Activated CD4-positive, alpha-beta T cell treated with anti-CD3 and anti-CD28 coated beads, Interleukin-2, amount 10 ng/mL, durations not matched to agents 24 days and 14 days (primary cell): ENCODE measurements at regions of chr2 and their contacts with region 1.

Region 1: DNA sequence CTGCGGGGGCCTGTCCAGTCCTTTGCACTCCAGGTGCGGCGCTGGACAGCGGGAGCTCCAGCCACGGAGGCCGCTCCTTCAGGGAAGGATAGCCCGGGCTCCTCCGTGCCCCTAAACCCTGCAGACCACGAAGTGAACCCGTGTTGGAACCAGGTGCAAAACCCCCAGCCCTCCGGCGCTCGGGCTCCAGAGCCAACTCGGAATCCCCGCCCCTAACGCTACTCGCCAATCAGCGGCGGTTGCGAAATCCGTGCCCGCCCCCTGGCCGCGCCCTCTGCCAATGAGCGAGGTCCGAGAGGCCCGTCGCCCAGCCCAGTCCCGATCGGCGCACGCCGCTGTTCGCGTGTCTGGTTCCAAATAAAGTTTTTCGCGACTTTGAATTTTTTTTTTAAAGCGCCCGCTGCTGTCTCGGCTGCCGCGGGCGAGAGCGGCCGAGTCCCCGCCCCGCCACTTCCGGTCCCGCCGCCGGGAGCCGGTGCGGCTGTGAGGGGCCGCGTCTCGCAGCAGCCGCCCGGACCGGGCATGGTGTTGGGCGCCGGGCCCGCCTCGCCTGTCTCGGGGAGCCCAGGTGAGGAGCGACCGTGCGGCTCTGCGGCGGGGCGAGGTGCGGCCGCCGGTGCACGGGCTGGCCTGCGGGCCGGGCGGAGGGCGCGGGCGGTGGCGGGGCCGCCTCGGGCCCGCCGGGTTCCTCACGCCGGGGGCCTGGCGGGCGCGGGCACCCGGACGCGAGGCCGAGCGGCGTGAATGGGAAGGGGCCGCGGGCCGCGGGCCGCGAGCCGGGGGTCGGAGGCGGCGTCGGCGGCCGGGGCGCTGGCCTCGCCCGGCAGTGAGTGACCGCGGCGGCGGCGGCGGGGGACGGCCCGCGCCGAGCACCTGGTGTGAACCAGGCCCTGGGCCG is at the start of gene UBE2F:
- DNase-seq: peak; percentile 100
- H3K4me3 Mint-ChIP-seq: peak within 1 kb of the TSS; percentile 94
- H3K27ac Mint-ChIP-seq: peak within 1 kb of the TSS; percentile 92
- H3K4me1 Mint-ChIP-seq: peaks cover 33% of the 10 kb centered on the region
- H3K27me3 Mint-ChIP-seq: no peaks in the 10 kb centered on the region
- total RNA-seq, gene UBE2F: 115 and 124 TPM in 2 replicates

Region 2: DNA sequence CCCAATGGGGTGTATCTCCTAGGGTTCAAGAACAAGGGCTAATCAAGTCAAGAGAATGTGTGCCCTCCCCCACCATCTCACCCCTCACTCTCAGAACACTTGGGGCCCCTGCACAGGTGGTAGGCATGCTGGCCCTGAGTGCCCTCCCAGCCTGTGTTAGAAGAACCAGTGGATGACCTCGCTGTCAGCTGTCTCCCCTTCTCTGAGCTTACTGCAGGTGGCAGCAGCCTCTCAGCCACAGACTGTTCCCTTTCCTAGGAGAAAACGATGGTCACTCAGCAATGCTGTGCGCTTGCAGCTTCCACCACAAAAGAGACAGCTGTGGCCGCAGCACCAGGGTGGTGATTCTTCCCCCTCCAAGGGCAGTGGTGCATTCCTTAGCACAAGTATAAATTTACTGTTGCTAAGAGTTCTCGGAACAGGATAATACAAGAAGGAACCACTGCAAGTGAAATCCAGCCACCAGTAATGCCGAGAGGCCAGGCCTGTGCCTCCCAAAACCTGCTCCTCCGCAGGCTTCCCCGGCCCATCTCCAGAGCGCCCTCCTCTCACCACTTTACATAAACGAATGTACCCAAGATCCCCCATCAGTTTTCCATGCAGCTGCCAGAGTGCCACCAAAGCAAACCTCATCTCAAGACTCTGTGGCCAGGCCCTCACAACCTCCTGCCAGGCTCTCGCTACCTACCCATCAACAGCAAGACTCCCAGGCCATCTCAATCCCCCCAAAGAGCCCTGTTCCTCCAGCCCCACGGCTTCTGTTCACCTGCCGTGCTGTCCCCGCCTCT is 108.3 kb before region 1 on chr2:
- intact Hi-C with region 1: loop called (anchors 1 kb)
- DNase-seq: peak; percentile 87
- H3K4me3 Mint-ChIP-seq: peak overlapping the region; percentile 65
- H3K27ac Mint-ChIP-seq: peak overlapping the region; percentile 30
- H3K4me1 Mint-ChIP-seq: peaks cover 12% of the 10 kb centered on the region
- H3K27me3 Mint-ChIP-seq: peaks cover 52% of the 10 kb centered on the region

Region 3: DNA sequence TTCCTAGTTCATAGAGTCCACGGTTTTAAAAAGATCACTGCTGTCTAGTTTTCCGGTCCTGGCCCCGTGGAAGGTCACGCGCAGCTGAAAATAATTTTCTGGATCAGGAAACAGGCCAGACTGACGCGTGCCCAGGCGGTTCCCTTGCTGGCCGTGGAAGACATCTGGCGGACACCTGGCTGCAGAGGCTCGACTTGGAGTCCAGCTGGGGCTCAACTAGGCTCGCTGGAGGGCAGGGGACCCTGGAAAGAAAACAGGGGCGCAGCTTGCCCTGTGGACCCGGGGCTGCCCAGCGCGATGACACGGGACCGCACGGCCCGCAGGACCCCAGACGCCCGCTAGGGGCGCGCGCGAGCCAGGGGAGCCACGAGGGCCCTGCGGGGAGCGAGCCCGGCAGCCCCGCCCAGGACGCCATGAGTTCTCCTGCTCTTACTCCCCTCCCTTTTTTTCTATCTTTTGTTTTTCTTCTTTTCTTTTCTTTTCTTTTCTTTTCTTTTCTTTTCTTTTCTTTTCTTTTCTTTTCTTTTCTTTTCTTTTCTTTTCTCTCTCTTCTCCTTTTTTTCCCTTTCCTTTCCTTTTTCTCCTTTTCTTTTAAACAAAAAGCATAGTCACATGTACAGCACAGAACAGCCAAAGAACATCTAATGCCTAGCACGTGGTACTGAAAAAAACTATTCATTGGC is 43.2 kb before region 1 on chr2:
- intact Hi-C with region 1: loop called (anchors 1 kb)
- DNase-seq: peak; percentile 95
- H3K4me3 Mint-ChIP-seq: peak overlapping the region; percentile 66
- H3K27ac Mint-ChIP-seq: peak overlapping the region; percentile 86
- H3K4me1 Mint-ChIP-seq: peaks cover 37% of the 10 kb centered on the region
- H3K27me3 Mint-ChIP-seq: no peaks in the 10 kb centered on the region

Region 4: DNA sequence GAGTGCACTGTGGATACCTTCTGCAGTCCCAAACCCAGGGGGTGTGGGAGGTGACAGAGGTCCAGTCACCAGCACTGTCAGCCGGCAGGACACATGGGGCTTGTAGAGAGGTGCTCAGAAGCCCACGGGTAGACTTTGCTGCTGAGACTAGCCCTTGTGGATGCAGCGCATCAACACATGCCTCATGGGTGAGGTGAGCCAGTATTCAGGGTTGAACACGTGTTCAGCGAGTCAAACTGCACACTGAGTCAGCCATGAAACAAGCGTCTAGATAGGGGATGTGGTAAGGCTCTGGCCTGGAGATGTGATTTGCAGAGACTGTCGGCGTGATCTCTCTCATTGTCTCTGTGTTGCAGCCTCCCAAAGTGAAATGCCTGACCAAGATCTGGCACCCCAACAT is 58.2 kb after region 1 on chr2:
- intact Hi-C with region 1: loop called (anchors 1 kb)
- DNase-seq: peak; percentile 72
- H3K4me3 Mint-ChIP-seq: peak overlapping the region; percentile 31
- H3K27ac Mint-ChIP-seq: peak overlapping the region; percentile 65
- H3K4me1 Mint-ChIP-seq: peaks cover 23% of the 10 kb centered on the region
- H3K27me3 Mint-ChIP-seq: no peaks in the 10 kb centered on the region

Region 5: DNA sequence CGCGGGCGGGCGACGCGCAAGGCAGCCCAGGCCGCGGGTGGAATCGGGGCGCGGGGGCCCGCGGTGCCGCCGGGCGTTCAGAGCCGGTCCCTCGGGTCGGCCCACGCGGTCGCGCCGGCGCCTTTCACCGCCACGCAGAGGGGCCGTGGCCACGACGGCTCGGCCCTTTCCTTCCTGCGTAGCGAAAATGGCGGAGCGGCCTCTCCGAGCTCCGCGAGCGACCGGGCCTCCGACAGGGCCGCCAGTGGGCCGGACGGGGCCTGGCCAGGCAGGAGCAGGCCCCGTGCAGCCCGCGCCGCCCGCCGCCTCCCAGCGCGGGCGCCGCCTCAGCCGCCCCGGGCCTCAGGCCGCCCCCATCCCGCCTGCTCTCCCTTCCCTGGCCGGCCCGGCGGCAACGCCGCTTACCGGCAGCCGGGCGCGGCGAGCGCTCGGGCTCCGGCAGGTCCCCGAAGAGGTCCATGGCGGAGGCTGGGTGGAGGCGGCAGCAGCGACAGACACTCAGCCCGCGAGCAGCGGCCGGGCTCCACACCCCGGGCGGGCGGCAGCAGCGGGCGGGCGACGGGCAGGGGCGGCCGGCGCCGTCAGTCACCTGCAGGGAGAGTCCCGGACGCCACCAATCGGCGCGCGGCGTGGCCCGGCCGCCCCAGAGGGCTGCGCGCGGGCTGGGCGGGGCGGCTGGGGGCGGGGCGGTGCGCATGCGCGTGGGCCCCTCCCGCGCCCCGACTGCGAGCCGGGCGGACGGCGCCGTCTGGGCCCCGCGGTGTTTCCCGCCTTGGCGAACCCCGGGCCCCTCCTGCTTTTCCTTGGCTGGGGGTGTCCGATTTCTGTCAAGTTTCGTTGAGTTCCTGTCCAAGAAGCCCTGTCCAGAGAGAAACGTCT is 236.5 kb after region 1 on chr2 and contains the start of gene ILKAP:
- intact Hi-C with region 1: loop called (anchors 2 kb)
- DNase-seq: peak; percentile 97
- H3K4me3 Mint-ChIP-seq: peak within 1 kb of the TSS; percentile 87
- H3K27ac Mint-ChIP-seq: peak within 1 kb of the TSS; percentile 87
- H3K4me1 Mint-ChIP-seq: peaks cover 29% of the 10 kb centered on the region
- H3K27me3 Mint-ChIP-seq: no peaks in the 10 kb centered on the region
- total RNA-seq, gene ILKAP: 74.4 and 77.4 TPM in 2 replicates

Region 6: GRCh38 chr2:238263204-238264071 is 296.6 kb after region 1 on chr2:
- intact Hi-C with region 1: loop called (anchors 2 kb)
- DNase-seq: peak; percentile 92
- H3K4me3 Mint-ChIP-seq: no peak overlapping the region
- H3K27ac Mint-ChIP-seq: no peak overlapping the region
- H3K4me1 Mint-ChIP-seq: peaks cover 11% of the 10 kb centered on the region
- H3K27me3 Mint-ChIP-seq: no peaks in the 10 kb centered on the region